ENCODE measurements at regions of chr5 and their contacts with region 1.

Region 1: GRCh38 chr5:173615884-173616576 is 420 bp downstream of the BOD1 start:
- DNase-seq: peak; percentile 91
- H3K4me3 Mint-ChIP-seq: peak overlapping the region; percentile 95
- H3K27ac Mint-ChIP-seq: peak overlapping the region; percentile 95
- H3K4me1 Mint-ChIP-seq: peaks cover 32% of the 10 kb centered on the region
- H3K27me3 Mint-ChIP-seq: no peaks in the 10 kb centered on the region

Region 2: GRCh38 chr5:172958331-172959046 is 657.5 kb before region 1 on chr5:
- intact Hi-C with region 1: loop called (anchors 1 kb)
- DNase-seq: peak; percentile 86
- H3K4me3 Mint-ChIP-seq: peak overlapping the region; percentile 92
- H3K27ac Mint-ChIP-seq: peak overlapping the region; percentile 90
- H3K4me1 Mint-ChIP-seq: peaks cover 30% of the 10 kb centered on the region
- H3K27me3 Mint-ChIP-seq: peaks cover 4% of the 10 kb centered on the region

Region 3: DNA sequence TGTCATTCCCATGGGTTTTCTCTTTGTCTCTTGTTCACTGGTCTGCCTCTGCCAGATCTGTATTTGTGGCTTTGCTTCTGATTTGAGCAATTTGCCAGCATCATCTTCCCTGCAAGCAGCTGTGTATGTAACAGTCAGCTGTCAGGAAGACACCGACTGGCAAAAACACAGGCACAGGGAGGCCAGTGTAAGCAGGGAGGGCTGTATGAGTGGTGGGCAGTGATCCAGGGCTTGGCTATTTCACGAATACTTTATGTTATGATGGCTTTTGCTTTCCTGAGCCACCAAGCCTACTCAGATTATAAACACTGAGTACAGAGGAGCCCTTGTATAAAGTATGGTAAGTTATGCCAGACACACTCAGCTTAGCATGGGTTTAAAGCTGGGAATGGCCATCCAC is 460.1 kb before region 1 on chr5:
- intact Hi-C with region 1: no loop called
- DNase-seq: no peak
- H3K4me3 Mint-ChIP-seq: no peak overlapping the region
- H3K27ac Mint-ChIP-seq: no peak overlapping the region
- H3K4me1 Mint-ChIP-seq: no peaks in the 10 kb centered on the region
- H3K27me3 Mint-ChIP-seq: no peaks in the 10 kb centered on the region

Region 4: GRCh38 chr5:173887610-173888472 is 271.8 kb after region 1 on chr5 and contains the start of gene CPEB4:
- intact Hi-C with region 1: loop called (anchors 1 kb)
- DNase-seq: peak; percentile 99
- H3K4me3 Mint-ChIP-seq: peak within 1 kb of the TSS; percentile 96
- H3K27ac Mint-ChIP-seq: peak within 1 kb of the TSS; percentile 99
- H3K4me1 Mint-ChIP-seq: peaks cover 60% of the 10 kb centered on the region
- H3K27me3 Mint-ChIP-seq: no peaks in the 10 kb centered on the region
- total RNA-seq, gene CPEB4: 7.6 and 8.8 TPM in 2 replicates

Region 5: GRCh38 chr5:173917788-173918786 is 302.1 kb after region 1 on chr5:
- intact Hi-C with region 1: loop called (anchors 1 kb)
- DNase-seq: peak; percentile 85
- H3K4me3 Mint-ChIP-seq: no peak overlapping the region
- H3K27ac Mint-ChIP-seq: no peak overlapping the region
- H3K4me1 Mint-ChIP-seq: peaks cover 7% of the 10 kb centered on the region
- H3K27me3 Mint-ChIP-seq: no peaks in the 10 kb centered on the region

Region 6: DNA sequence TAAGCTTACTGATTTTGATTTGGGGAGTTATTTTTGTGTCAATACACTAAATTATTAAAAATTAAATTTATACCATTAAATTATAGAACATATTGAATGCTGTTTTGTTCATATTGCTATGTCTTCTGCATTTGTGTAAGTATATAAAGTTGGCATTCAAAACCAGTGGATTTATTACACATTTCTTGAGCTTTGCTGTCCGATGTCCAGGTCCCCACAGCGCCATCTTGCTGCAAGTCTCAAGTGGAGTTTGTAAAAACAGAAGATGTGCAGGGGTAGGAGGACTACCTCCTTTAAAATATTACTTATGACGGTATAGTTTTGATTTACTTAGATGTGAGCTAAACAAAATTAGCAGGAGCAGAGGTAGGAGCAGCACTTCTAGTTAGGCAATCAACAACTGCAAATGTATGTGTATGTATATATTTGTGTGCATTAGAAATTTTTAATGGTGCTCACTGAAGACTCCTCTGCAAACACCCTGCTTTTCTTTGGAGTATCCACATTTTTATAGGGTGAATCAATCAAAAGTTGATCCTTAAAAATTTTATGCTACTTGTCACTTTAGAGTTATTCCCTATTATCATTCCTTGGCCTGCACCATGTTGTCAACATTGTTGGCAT is 309.5 kb after region 1 on chr5:
- intact Hi-C with region 1: loop called (anchors 1 kb)
- DNase-seq: peak; percentile 80
- H3K4me3 Mint-ChIP-seq: no peak overlapping the region
- H3K27ac Mint-ChIP-seq: no peak overlapping the region
- H3K4me1 Mint-ChIP-seq: peaks cover 7% of the 10 kb centered on the region
- H3K27me3 Mint-ChIP-seq: no peaks in the 10 kb centered on the region

Region 7: GRCh38 chr5:173972925-173973615 is 357.0 kb after region 1 on chr5:
- intact Hi-C with region 1: loop called (anchors 1 kb)
- DNase-seq: peak; percentile 91
- H3K4me3 Mint-ChIP-seq: peak overlapping the region; percentile 84
- H3K27ac Mint-ChIP-seq: no peak overlapping the region
- H3K4me1 Mint-ChIP-seq: peaks cover 13% of the 10 kb centered on the region
- H3K27me3 Mint-ChIP-seq: peaks cover 29% of the 10 kb centered on the region

Region 8: DNA sequence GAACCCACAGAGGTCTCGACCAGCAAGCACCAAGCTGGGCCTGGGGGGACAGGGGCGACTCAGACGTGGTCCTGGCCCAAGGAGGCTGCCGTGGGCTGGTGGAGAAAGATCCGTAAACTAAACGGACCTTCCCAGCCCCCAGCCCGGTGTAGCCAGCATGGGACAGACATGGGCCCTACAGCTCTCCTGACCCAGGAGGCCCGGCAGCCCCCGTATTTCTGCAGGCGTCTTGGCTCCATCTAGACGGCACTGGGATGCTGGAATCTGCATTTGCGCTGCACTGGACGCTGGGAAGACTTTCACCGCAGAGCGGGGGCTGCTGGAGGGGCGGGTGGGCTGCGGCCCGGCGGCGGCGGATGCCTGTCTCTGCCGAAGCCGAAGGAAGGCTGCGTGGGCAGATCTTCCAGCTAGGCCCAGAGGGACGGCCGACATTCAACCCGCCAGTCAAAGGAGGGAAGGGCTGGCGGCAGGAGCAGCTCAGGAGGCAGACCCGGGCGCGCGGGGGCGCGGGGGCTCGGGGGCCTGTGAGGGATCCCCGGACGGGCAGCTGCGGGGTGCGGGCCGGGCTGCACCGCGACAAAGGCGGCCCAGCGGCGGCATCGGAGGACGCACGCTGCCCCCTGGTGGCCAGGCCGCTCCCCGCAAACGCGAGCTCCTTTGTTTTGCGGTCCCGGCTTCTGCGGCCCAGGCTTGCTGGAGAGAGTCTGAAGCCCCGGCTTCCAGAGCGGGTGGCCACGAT is 695.7 kb after region 1 on chr5:
- intact Hi-C with region 1: loop called (anchors 1 kb)
- DNase-seq: peak; percentile 89
- H3K4me3 Mint-ChIP-seq: peak overlapping the region; percentile 32
- H3K27ac Mint-ChIP-seq: no peak overlapping the region
- H3K4me1 Mint-ChIP-seq: no peaks in the 10 kb centered on the region
- H3K27me3 Mint-ChIP-seq: peaks cover 9% of the 10 kb centered on the region

Measured in activated CD4-positive, alpha-beta T cell treated with anti-CD3 and anti-CD28 coated beads, Interleukin-2, amount 10 ng/mL, durations not matched to agents 24 days and 14 days (primary cell).